ENCODE measurements at regions of chr2 and their contacts with region 1.

Region 1: GRCh38 chr2:217785544-217786045 is 217.2 kb downstream of the TNS1 start:
- DNase-seq: peak; percentile 73
- H3K4me3 ChIP-seq: no peak overlapping the region
- H3K27ac ChIP-seq: no peak overlapping the region
- H3K4me1 ChIP-seq: no peaks in the 10 kb centered on the region
- H3K27me3 ChIP-seq: peaks cover 1 to 4% of the 10 kb centered on the region in 2 experiments
- CTCF ChIP-seq: peak; percentile 90 to 95
- POLR2A ChIP-seq: no peak

Region 2: DNA sequence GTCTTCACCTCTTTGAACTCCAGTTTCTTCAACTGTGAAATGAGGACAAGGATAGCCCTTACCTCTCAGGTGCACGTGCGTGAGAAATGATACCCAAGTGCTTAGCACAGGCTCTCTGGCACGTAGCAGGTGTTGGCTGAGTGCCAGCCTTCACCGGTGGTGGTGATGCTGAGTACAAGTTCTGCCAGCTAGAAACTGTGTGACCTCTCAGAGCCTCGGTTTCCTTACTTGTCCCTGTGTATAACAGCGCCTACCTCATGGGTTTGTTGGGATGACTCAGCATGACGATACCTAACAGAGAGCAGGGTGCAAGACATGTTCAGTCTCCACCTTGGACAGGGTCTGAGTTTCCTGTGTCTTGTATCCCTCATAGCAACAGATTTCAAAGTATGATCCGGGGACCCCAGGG is 12.1 kb after region 1 on chr2:
- CTCF ChIA-PET with region 1: interaction called, 30 read pairs
- POLR2A ChIA-PET with region 1: no interaction called
- dilution Hi-C with region 1: no loop called
- intact Hi-C with region 1: no loop called
- DNase-seq: no peak
- H3K4me3 ChIP-seq: no peak overlapping the region
- H3K27ac ChIP-seq: no peak overlapping the region
- H3K4me1 ChIP-seq: no peaks in the 10 kb centered on the region
- H3K27me3 ChIP-seq: no peaks in the 10 kb centered on the region
- CTCF ChIP-seq: no peak
- POLR2A ChIP-seq: no peak

Region 3: GRCh38 chr2:217899231-217900009 is 113.8 kb after region 1 on chr2:
- CTCF ChIA-PET with region 1: interaction called, 16 read pairs
- POLR2A ChIA-PET with region 1: no interaction called
- dilution Hi-C with region 1: no loop called
- intact Hi-C with region 1: no loop called
- DNase-seq: no peak
- H3K4me3 ChIP-seq: no peak overlapping the region
- H3K27ac ChIP-seq: no peak overlapping the region
- H3K4me1 ChIP-seq: peaks cover 35% of the 10 kb centered on the region
- H3K27me3 ChIP-seq: no peaks in the 10 kb centered on the region
- CTCF ChIP-seq: peak; percentile 47 to 63
- POLR2A ChIP-seq: no peak

Region 4: DNA sequence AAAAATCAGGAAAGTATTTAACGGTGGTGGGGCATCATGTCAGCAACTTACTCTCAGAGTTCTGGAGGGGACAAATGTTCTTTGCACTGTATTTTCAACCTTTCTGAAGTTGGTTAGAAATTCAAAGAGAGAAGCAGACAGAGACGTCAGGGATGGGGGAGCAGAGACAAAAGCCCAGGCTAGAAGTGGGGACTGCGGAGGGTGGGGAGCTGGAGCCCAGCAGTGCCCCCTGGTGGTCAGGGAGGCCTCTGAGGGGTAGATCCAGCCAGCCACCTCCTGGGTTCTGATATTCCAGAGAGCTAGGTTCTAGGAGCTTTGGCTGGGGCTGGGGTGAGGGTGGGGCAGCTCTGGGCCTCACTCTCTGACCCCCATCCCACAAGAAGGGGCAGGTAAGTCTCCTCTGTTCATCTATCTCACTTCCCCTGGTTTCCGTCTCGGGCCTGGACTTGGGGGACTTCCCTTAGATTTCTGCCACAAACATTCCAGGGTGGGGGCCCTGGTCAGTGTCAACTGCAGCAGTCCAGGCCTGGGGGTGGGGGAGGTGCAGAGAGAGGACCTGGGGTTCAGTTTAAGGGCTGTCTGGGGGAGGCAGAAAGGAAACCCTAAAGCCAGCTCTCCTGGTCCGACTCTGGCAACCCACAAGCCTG is 208.3 kb after region 1 on chr2:
- CTCF ChIA-PET with region 1: interaction called, 204 read pairs
- POLR2A ChIA-PET with region 1: no interaction called
- dilution Hi-C with region 1: no loop called
- intact Hi-C with region 1: loop called (anchors 1 kb)
- DNase-seq: peak; percentile 54
- H3K4me3 ChIP-seq: peak overlapping the region in 1 of 3 experiments; percentile 59
- H3K27ac ChIP-seq: peak overlapping the region; percentile 74
- H3K4me1 ChIP-seq: peaks cover 33% of the 10 kb centered on the region
- H3K27me3 ChIP-seq: no peaks in the 10 kb centered on the region
- CTCF ChIP-seq: peak; percentile 80 to 96
- POLR2A ChIP-seq: no peak

Region 5: DNA sequence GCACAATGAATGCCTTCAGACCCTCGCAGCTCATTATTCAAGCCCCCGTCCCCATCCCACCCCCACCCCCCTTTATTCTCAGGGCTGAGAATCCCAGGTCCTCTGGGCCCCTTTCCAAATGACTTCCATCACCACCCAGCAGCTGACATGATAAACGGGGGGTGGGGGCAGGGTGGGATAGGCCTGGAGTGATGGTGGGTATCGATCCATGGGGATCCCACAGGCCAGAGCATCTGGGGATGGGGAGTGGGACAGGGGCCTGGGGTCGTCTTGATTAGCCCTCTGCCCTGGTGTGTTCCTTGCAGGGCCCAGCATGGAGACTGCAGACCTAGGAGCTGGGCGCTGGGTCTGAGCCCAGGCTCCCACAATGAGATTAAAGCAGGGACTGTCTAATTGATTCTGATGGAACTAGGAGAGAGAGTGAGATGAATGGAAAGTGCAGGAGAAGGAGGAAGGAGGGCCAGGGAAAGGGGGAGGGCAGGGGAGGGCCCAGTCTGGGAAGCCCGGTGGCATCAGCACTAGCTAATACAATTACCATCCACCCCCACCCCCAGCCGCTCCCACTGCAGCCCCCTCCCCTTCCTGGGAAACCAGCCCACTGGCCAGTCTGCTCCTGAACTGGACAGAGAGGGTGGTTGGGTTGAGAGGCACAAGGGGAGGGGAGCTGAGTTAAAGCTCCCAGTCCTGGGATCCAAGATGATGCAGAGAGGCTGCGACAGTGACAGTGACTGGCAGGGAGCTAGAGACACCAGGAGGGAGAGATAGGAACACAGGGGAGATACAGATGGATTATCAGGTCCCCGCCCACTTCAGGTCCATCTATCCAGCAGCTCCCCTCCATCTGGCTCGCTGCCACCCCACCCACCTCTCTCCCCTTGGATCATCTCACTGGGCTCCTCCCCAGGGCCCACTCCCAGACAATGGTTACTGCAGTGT is 230.3 kb after region 1 on chr2:
- CTCF ChIA-PET with region 1: interaction called, 13 read pairs
- POLR2A ChIA-PET with region 1: no interaction called
- dilution Hi-C with region 1: no loop called
- intact Hi-C with region 1: no loop called
- DNase-seq: no peak
- H3K4me3 ChIP-seq: no peak overlapping the region
- H3K27ac ChIP-seq: no peak overlapping the region
- H3K4me1 ChIP-seq: peaks cover 7% of the 10 kb centered on the region
- H3K27me3 ChIP-seq: no peaks in the 10 kb centered on the region
- CTCF ChIP-seq: no peak
- POLR2A ChIP-seq: no peak

Region 6: DNA sequence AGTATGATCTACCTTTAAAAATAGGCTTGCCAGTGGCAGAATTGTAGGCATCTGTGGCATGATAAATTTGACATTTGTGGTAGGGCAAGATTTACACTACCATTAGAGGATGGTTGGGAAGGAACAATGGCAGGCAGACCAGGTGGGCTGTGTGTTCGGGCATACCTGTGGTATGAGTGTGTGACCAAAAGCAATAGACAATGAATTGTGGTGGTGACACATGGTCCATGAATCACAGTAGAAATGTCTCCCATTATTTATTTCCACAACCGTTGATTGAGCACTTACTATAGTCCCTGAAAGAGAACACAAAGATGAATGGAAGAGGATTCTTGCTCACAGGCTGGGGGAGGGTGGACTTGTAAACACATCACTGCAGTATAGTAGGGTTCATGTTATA is 253.6 kb after region 1 on chr2:
- CTCF ChIA-PET with region 1: interaction called, 341 read pairs
- POLR2A ChIA-PET with region 1: no interaction called
- dilution Hi-C with region 1: no loop called
- intact Hi-C with region 1: loop called (anchors 1 kb)
- DNase-seq: no peak
- H3K4me3 ChIP-seq: no peak overlapping the region
- H3K27ac ChIP-seq: no peak overlapping the region
- H3K4me1 ChIP-seq: no peaks in the 10 kb centered on the region
- H3K27me3 ChIP-seq: peaks cover 12 to 28% of the 10 kb centered on the region in 2 experiments
- CTCF ChIP-seq: no peak
- POLR2A ChIP-seq: no peak

Region 7: GRCh38 chr2:218074031-218074430 is 288.4 kb after region 1 on chr2:
- CTCF ChIA-PET with region 1: interaction called, 317 read pairs
- POLR2A ChIA-PET with region 1: interaction called, 3 read pairs
- dilution Hi-C with region 1: no loop called
- intact Hi-C with region 1: loop called (anchors 1 kb)
- DNase-seq: peak; percentile 17
- H3K4me3 ChIP-seq: no peak overlapping the region
- H3K27ac ChIP-seq: no peak overlapping the region
- H3K4me1 ChIP-seq: no peaks in the 10 kb centered on the region
- H3K27me3 ChIP-seq: no peaks in the 10 kb centered on the region
- CTCF ChIP-seq: peak; percentile 42 to 71
- POLR2A ChIP-seq: no peak

Measured in endothelial cell of umbilical vein (primary cell).